Adrenal gland (tissue), 19 donors: ENCODE measurements at regions of chr15 and their contacts with region 1.

Region 1: DNA sequence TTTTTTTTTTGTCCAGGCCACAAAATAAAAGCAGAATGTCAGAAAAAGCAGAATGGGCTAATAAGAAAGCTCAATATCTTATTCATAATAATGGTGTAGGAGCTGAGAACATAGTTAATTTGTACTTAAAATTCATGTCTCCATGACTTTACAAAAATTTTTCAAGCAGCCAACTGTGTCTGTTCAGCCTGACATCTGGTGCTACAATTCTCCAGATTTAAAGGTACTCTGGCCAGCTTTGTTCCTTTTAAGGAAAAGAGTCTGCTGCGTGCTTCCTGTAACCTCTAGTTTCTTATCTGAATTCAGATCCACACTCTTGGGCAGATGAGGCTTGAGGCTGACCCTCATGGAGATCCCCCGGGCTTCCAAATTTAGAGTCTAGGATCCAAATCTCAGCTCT is 8.7 kb upstream of the RFX7 start:
- DNase-seq: no peak
- H3K4me3 ChIP-seq: no peak overlapping the region
- H3K27ac ChIP-seq: no peak overlapping the region
- H3K4me1 ChIP-seq: no peaks in the 10 kb centered on the region
- H3K27me3 ChIP-seq: no peaks in the 10 kb centered on the region
- CTCF ChIP-seq: no peak
- POLR2A ChIP-seq: no peak

Region 2: DNA sequence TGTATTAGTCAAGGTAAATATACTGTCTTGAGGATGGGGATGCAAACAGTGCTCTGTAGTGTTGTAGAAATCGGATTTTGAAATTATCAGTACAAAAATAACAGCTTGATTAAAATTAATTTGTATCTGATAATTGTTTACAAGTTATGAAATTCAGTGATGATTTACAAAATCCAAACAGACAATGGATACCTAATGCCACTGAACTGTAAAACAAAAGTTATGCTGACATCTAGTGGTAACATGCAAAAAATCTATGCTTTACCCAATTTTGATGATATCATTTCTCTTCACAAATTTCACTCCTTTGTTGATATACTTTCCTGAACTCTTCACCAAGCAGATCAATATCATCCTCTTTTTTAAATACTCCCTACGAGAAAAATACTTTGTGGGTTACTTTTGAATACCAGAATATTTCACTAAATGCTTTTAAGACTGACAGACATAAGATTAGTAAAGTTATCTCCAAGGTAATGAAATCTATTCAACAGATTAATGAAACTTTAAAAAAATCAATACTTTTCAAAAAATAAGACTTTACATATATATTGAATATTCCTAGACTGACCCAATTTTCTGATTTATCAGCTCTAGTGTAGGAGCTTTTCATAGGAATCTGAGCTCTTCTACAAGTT is 176.6 kb after region 1 on chr15:
- intact Hi-C with region 1: loop called (anchors 5 to 10 kb)
- DNase-seq: no peak
- H3K4me3 ChIP-seq: no peak overlapping the region
- H3K27ac ChIP-seq: no peak overlapping the region
- H3K4me1 ChIP-seq: no peaks in the 10 kb centered on the region
- H3K27me3 ChIP-seq: no peaks in the 10 kb centered on the region
- CTCF ChIP-seq: peak; percentile 37 to 71 (median 58)
- POLR2A ChIP-seq: no peak